ENCODE measurements at regions of chr17 and their contacts with region 1.

Region 1: GRCh38 chr17:50311112-50311460 is 34.8 kb upstream of the XYLT2 start:
- DNase-seq: peak; percentile 36
- H3K4me3 Mint-ChIP-seq: no peak overlapping the region
- H3K27ac Mint-ChIP-seq: peak overlapping the region; percentile 85
- H3K4me1 Mint-ChIP-seq: peaks cover 39% of the 10 kb centered on the region
- H3K27me3 Mint-ChIP-seq: peaks cover 13% of the 10 kb centered on the region

Region 2: DNA sequence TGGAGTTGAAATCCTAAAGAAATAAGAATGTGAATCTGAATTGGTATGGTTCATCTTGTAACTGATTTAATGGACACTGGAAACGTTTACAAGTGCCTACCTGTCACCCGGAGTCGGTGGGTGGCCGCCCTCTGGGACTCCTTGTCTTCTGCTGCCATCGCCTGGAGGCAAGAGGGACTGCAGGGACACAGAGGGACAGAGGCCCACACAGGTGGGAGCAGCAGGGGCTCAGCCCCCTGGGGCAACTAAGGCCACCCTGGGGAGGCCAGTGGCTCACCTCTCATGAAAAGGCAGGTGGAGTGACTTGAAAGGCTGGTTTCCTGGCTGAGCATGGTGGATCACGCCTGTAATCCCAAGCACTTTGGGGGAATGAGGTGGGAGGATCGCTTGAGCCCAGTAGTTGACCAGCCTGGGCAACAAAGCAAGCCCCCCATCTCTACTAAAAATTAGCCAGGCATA is 13.7 kb before region 1 on chr17:
- CTCF ChIA-PET with region 1: interaction called, 15 read pairs
- POLR2A ChIA-PET with region 1: no interaction called
- intact Hi-C with region 1: no loop called
- DNase-seq: peak; percentile 90
- H3K4me3 Mint-ChIP-seq: no peak overlapping the region
- H3K27ac Mint-ChIP-seq: no peak overlapping the region
- H3K4me1 Mint-ChIP-seq: peaks cover 8% of the 10 kb centered on the region
- H3K27me3 Mint-ChIP-seq: peaks cover 15% of the 10 kb centered on the region

Region 3: GRCh38 chr17:50345432-50346312 is 34.6 kb after region 1 on chr17 and contains the start of gene XYLT2:
- CTCF ChIA-PET with region 1: no interaction called
- POLR2A ChIA-PET with region 1: interaction called, 10 read pairs
- intact Hi-C with region 1: no loop called
- DNase-seq: peak; percentile 92
- H3K4me3 Mint-ChIP-seq: peak within 1 kb of the TSS; percentile 91
- H3K27ac Mint-ChIP-seq: peak within 1 kb of the TSS; percentile 91
- H3K4me1 Mint-ChIP-seq: peaks cover 38% of the 10 kb centered on the region
- H3K27me3 Mint-ChIP-seq: no peaks in the 10 kb centered on the region
- total RNA-seq, gene XYLT2: 41.3 to 43.3 TPM

Region 4: DNA sequence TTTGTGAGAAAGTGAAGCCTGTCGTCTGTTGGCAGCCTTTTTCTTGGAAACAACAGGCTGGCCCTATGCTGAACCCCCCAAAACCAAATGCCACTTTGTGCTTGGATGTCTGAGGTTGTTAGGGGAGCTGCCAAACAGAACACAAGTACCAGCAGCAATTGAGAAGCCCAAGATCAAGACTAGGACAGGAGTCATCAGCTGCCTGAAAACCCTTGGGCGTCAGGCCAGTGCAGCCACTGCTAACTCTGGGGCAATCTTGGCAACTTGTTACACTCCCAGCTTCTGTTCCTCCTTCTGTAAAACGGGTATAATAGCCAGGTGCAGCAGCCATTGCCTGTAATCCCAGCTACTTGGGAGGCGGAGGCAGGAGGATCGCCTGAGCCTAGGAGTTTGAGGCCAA is 95.5 kb after region 1 on chr17:
- CTCF ChIA-PET with region 1: no interaction called
- POLR2A ChIA-PET with region 1: no interaction called
- intact Hi-C with region 1: no loop called
- DNase-seq: no peak
- H3K4me3 Mint-ChIP-seq: no peak overlapping the region
- H3K27ac Mint-ChIP-seq: no peak overlapping the region
- H3K4me1 Mint-ChIP-seq: no peaks in the 10 kb centered on the region
- H3K27me3 Mint-ChIP-seq: peaks cover 10% of the 10 kb centered on the region